SK-N-SH (cell line): ENCODE measurements at regions of chr7 and their contacts with region 1.

Region 1: DNA sequence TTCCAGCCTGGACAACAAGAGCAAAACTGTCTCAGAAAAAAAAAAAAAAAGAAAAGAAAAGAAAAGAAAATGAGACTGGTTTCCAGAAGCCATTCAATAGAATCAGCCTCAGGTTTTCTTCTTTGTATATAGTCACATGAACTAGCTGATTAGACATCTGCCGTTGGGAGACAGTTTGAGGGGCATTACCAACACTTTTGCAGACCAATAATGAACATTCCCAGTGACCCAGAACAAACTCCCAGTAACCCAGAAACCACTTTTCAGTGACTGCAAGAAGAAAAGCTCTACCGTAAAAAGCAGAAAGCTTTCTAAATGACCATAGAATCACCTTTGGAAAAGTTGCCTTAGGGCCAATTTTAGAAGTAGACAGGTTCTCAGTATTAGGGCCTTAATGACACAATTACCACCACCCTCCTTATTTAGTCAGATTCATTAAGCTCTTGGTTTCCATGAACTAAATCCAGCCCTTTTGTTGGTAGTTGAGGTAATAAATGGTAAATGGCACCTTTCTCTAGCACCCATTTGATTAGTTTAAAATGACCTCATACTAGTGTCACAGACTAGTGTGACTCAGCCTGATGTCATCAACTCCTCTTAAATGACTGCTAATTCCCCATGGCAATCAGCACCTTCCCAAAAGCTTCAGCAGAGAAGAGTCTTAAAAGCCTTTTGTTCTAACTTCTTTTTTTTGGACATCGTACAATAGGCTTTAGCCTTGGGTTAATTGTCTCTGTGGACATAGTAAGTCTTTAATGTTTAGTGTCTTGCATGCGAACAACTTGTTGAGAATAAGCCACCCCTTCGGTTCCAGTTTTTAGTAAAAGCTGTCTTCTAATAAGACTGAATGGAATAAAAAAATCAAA is 33.6 kb upstream of the XRCC2 start:
- DNase-seq: no peak
- H3K4me3 ChIP-seq: no peak overlapping the region
- H3K27ac ChIP-seq: no peak overlapping the region
- H3K4me1 ChIP-seq: no peaks in the 10 kb centered on the region
- H3K27me3 ChIP-seq: no peaks in the 10 kb centered on the region
- CTCF ChIP-seq: no peak
- EP300 ChIP-seq: no peak
- RAD21 ChIP-seq: no peak

Region 2: DNA sequence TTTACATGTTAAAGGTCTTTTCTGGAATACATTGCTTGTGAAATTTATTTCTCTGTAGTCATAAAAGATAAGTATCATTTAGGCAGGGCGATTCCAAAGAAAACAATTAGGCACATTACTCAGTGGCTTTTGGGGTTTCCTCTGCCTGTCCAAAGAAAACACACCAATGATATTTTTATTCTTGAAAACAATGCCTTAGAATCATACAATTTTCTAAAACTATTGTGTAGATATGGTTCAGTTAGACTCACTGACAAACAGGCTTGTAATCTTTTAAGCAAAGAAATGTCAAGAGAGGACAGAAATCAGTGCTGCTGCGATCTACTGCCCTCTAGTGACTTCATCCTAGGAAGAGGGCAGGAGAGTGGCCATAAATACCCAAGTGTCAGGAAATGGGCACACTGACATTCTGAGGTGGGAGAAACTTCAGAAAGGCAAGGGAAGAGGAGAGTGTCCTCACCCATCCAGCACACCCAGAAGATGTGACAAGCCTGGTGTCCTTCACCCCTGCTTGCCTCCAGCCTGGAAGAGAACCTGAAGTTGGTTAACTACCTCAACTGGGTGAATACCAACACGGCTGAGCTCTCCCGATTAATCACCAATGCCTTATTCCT is 563.6 kb before region 1 on chr7:
- CTCF ChIA-PET with region 1: interaction called, 10 read pairs
- POLR2A ChIA-PET with region 1: no interaction called
- DNase-seq: peak; percentile 62
- H3K4me3 ChIP-seq: no peak overlapping the region; a peak in 1 of 4 replicates
- H3K27ac ChIP-seq: peak overlapping the region; percentile 9 to 63; a peak in 3 of 4 replicates
- H3K4me1 ChIP-seq: peaks cover 15 to 25% of the 10 kb centered on the region in 2 experiments
- H3K27me3 ChIP-seq: no peaks in the 10 kb centered on the region
- CTCF ChIP-seq: peak; percentile 96
- EP300 ChIP-seq: peak in 1 of 2 experiments; percentile 69; a peak in 1 of 4 replicates
- RAD21 ChIP-seq: peak; percentile 76

Region 3: GRCh38 chr7:152202056-152202455 is 507.5 kb before region 1 on chr7:
- CTCF ChIA-PET with region 1: interaction called, 11 read pairs
- POLR2A ChIA-PET with region 1: no interaction called
- DNase-seq: no peak
- H3K4me3 ChIP-seq: no peak overlapping the region
- H3K27ac ChIP-seq: peak overlapping the region; percentile 56 to 59; a peak in 3 of 4 replicates
- H3K4me1 ChIP-seq: peaks cover 5 to 16% of the 10 kb centered on the region in 2 experiments; a peak in 2 of 4 replicates
- H3K27me3 ChIP-seq: no peaks in the 10 kb centered on the region
- CTCF ChIP-seq: no peak
- EP300 ChIP-seq: 0 out of 4 replicates have a peak, but pooled peaks of 1 of the 2 experiments have one; percentile 16
- RAD21 ChIP-seq: no peak

Region 4: DNA sequence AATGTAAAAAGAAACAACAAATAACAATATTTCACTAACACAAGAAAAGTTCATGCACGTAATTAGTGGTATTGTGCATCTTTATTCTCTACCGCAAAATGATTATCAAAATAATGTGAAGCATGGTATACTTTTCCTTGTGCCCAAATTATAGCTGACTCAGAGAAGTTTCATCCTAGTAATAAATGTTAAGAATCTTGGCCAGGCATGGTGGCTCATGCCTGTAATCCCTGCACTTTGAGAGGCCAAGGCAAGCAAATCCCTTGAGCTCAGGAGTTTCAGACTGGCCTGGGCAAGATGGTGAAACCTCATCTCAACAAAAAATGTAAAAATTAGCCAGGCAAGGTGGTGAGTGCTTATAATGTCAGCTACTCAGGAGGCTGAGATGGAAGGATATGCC is 378.7 kb before region 1 on chr7:
- CTCF ChIA-PET with region 1: interaction called, 31 read pairs
- POLR2A ChIA-PET with region 1: no interaction called
- DNase-seq: no peak
- H3K4me3 ChIP-seq: no peak overlapping the region
- H3K27ac ChIP-seq: no peak overlapping the region
- H3K4me1 ChIP-seq: no peaks in the 10 kb centered on the region
- H3K27me3 ChIP-seq: no peaks in the 10 kb centered on the region
- CTCF ChIP-seq: no peak
- EP300 ChIP-seq: no peak
- RAD21 ChIP-seq: no peak

Region 5: GRCh38 chr7:152463709-152464311 is 245.7 kb before region 1 on chr7:
- CTCF ChIA-PET with region 1: interaction called, 12 read pairs
- POLR2A ChIA-PET with region 1: no interaction called
- DNase-seq: peak; percentile 100
- H3K4me3 ChIP-seq: peak overlapping the region; percentile 76 to 93
- H3K27ac ChIP-seq: peak overlapping the region; percentile 94 to 95
- H3K4me1 ChIP-seq: peaks cover 0 to 13% of the 10 kb centered on the region in 2 experiments; a peak in 2 of 4 replicates
- H3K27me3 ChIP-seq: no peaks in the 10 kb centered on the region
- CTCF ChIP-seq: no peak
- EP300 ChIP-seq: peak; percentile 49 to 73; a peak in 2 of 4 replicates
- RAD21 ChIP-seq: peak; percentile 18; the same call in 1 of the 2 replicates

Region 6: DNA sequence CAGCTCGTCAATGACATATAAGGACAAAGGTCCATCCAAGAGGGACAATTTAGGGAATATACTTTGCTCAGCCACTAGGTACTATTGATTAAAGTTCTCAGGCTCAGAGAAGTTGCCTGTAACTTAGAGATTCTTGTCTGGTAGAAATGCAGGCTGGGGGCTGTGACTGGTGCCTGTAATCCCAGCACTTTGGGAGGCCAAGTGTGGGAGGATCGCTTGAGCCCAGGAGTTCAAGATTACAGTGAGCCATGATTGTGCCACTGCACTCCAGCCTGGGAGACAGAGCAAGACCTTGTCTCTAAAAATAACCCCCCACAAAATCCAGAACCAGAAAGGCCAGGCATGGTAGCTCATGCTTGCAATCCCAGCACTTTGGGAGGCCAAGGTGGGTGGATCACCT is 13.8 kb after region 1 on chr7:
- CTCF ChIA-PET with region 1: interaction called, 13 read pairs
- POLR2A ChIA-PET with region 1: no interaction called
- DNase-seq: no peak
- H3K4me3 ChIP-seq: no peak overlapping the region
- H3K27ac ChIP-seq: no peak overlapping the region
- H3K4me1 ChIP-seq: no peaks in the 10 kb centered on the region
- H3K27me3 ChIP-seq: no peaks in the 10 kb centered on the region; the same call in 1 of the 2 replicates
- CTCF ChIP-seq: no peak
- EP300 ChIP-seq: no peak
- RAD21 ChIP-seq: no peak

Region 7: GRCh38 chr7:152959610-152960009 is 250.1 kb after region 1 on chr7:
- CTCF ChIA-PET with region 1: no interaction called
- POLR2A ChIA-PET with region 1: no interaction called
- DNase-seq: no peak
- H3K4me3 ChIP-seq: no peak overlapping the region
- H3K27ac ChIP-seq: no peak overlapping the region
- H3K4me1 ChIP-seq: no peaks in the 10 kb centered on the region
- H3K27me3 ChIP-seq: no peaks in the 10 kb centered on the region
- CTCF ChIP-seq: no peak
- EP300 ChIP-seq: no peak
- RAD21 ChIP-seq: no peak